ENCODE measurements at regions of chr7 and their contacts with region 1.

Region 1: GRCh38 chr7:122528879-122529481 is 169.9 kb downstream of the RNF133 start:
- DNase-seq: no peak
- H3K4me3 ChIP-seq: no peak overlapping the region
- H3K27ac ChIP-seq: no peak overlapping the region
- H3K4me1 ChIP-seq: no peaks in the 10 kb centered on the region
- H3K27me3 ChIP-seq: no peaks in the 10 kb centered on the region
- CTCF ChIP-seq: peak in 3 of 4 experiments; percentile 51 to 62 (median 54)
- POLR2A ChIP-seq: no peak

Region 2: GRCh38 chr7:122219253-122219865 is 309.6 kb before region 1 on chr7:
- intact Hi-C with region 1: loop called (anchors 5 kb)
- DNase-seq: no peak
- H3K4me3 ChIP-seq: no peak overlapping the region
- H3K27ac ChIP-seq: no peak overlapping the region
- H3K4me1 ChIP-seq: no peaks in the 10 kb centered on the region
- H3K27me3 ChIP-seq: no peaks in the 10 kb centered on the region
- CTCF ChIP-seq: peak in 3 of 4 experiments; percentile 56 to 72 (median 65)
- POLR2A ChIP-seq: no peak

Region 3: GRCh38 chr7:122637784-122638183 is 108.8 kb after region 1 on chr7:
- intact Hi-C with region 1: no loop called
- DNase-seq: no peak
- H3K4me3 ChIP-seq: no peak overlapping the region
- H3K27ac ChIP-seq: no peak overlapping the region
- H3K4me1 ChIP-seq: no peaks in the 10 kb centered on the region
- H3K27me3 ChIP-seq: no peaks in the 10 kb centered on the region
- CTCF ChIP-seq: no peak
- POLR2A ChIP-seq: no peak

Region 4: DNA sequence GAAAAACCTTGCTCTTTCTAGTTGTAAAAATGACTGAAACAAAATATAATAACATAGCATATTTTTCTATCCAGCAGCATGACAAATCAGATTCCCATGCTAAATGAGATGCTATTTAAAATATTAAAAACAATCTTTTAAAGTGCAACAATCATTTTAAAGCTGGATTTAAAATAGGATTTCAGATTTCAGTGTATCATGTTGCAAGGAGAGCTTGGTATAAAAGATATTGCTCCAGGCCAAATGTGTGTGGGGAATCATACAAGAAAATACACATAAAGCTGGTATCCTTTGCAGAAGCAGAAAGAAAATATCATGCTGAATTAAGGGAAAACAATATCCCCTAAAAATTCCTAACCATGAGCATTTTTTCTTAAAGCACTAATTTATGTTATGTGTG is 628.6 kb after region 1 on chr7:
- intact Hi-C with region 1: no loop called
- DNase-seq: no peak
- H3K4me3 ChIP-seq: no peak overlapping the region
- H3K27ac ChIP-seq: no peak overlapping the region
- H3K4me1 ChIP-seq: no peaks in the 10 kb centered on the region
- H3K27me3 ChIP-seq: no peaks in the 10 kb centered on the region
- CTCF ChIP-seq: no peak
- POLR2A ChIP-seq: no peak